ENCODE measurements at regions of chr18 and their contacts with region 1.

Region 1: GRCh38 chr18:77522051-77522675 is 272.5 kb downstream of the GALR1 start:
- DNase-seq: no peak
- H3K4me3 ChIP-seq: no peak overlapping the region
- H3K27ac ChIP-seq: no peak overlapping the region
- H3K4me1 ChIP-seq: no peaks in the 10 kb centered on the region
- H3K27me3 ChIP-seq: no peaks in the 10 kb centered on the region
- CTCF ChIP-seq: no peak
- EP300 ChIP-seq: no peak
- POLR2A ChIP-seq: no peak

Region 2: GRCh38 chr18:77262470-77263142 is 259.6 kb before region 1 on chr18:
- intact Hi-C with region 1: loop called in 1 of 4 experiments (anchors 10 kb)
- DNase-seq: no peak
- H3K4me3 ChIP-seq: no peak overlapping the region
- H3K27ac ChIP-seq: no peak overlapping the region
- H3K4me1 ChIP-seq: no peaks in the 10 kb centered on the region
- H3K27me3 ChIP-seq: no peaks in the 10 kb centered on the region
- CTCF ChIP-seq: no peak
- EP300 ChIP-seq: no peak
- POLR2A ChIP-seq: no peak

Region 3: GRCh38 chr18:77300579-77300978 is 221.6 kb before region 1 on chr18:
- intact Hi-C with region 1: no loop called
- DNase-seq: no peak
- H3K4me3 ChIP-seq: no peak overlapping the region
- H3K27ac ChIP-seq: no peak overlapping the region
- H3K4me1 ChIP-seq: no peaks in the 10 kb centered on the region
- H3K27me3 ChIP-seq: no peaks in the 10 kb centered on the region
- CTCF ChIP-seq: no peak
- EP300 ChIP-seq: no peak
- POLR2A ChIP-seq: no peak

Region 4: GRCh38 chr18:78407466-78407844 is 885.3 kb after region 1 on chr18:
- intact Hi-C with region 1: no loop called
- DNase-seq: no peak
- H3K4me3 ChIP-seq: no peak overlapping the region
- H3K27ac ChIP-seq: no peak overlapping the region
- H3K4me1 ChIP-seq: no peaks in the 10 kb centered on the region
- H3K27me3 ChIP-seq: no peaks in the 10 kb centered on the region
- CTCF ChIP-seq: no peak
- EP300 ChIP-seq: no peak
- POLR2A ChIP-seq: no peak